Heart left ventricle (tissue), 16 donors: ENCODE measurements at regions of chr19 and their contacts with region 1.

Region 1: DNA sequence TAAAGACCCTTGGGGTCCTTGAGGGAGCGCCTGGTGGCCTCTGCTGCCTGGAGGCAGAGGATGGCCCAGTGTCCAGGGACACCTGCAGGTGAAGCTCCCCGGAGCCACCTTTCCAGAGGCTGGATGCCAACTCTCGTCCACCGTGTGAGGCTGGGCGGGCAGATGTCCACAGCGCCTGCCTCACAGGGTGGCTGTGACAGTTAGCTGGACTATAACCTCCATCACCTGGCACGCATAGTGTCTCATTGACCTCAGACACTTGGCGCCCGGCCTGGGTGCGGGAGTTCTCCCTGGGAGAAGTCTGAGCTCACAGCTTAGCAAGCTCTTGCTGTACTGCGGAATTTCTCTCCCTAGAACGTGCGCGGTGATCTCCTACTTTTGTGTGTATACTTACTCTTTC is 9.8 kb downstream of the BICRA start:
- DNase-seq: peak; percentile 70 to 92 (median 85)
- ATAC-seq: peak; percentile 80 to 91 (median 90)
- H3K4me3 ChIP-seq: no peak overlapping the region
- H3K27ac ChIP-seq: peak overlapping the region in 10 of 12 donors; percentile 26 to 88 (median 64)
- H3K4me1 ChIP-seq: peaks cover 0 to 52% (median 26%) of the 10 kb centered on the region in 12 donors
- H3K27me3 ChIP-seq: no peaks in the 10 kb centered on the region
- CTCF ChIP-seq: no peak
- POLR2A ChIP-seq: no peak

Region 2: DNA sequence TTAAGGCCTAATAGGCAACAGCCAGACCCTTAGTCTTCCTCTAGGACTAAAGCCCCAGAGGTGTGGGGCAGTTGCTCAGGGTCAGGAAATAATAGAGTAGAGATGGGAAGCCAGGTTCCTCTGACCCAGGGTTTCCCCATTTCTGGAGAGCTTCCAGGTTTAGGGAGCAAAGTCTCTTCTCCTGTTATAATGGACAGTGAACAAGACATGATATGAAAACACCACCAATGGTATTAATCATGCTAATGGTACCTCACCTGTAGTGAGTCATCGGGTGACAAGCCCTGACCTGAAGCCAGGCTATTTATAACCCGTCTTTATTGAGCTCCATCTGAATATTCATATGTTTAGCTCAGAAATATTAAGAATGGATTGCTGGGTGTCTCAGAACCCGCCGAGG is 14.7 kb after region 1 on chr19:
- intact Hi-C with region 1: loop called in 1 of 10 experiments (anchors 2 kb)
- DNase-seq: no peak
- ATAC-seq: no peak
- H3K4me3 ChIP-seq: no peak overlapping the region
- H3K27ac ChIP-seq: peak overlapping the region in 3 of 12 donors; percentile 35 to 80 (median 41)
- H3K4me1 ChIP-seq: peaks cover 0 to 44% (median 22%) of the 10 kb centered on the region in 12 donors
- H3K27me3 ChIP-seq: no peaks in the 10 kb centered on the region
- CTCF ChIP-seq: no peak
- POLR2A ChIP-seq: no peak

Region 3: GRCh38 chr19:47663841-47664771 is 45.3 kb after region 1 on chr19:
- intact Hi-C with region 1: loop called in 7 of 10 experiments (anchors 5 to 10 kb)
- DNase-seq: peak in 4 of 5 donors; percentile 76 to 88 (median 80)
- ATAC-seq: peak; percentile 79 to 86 (median 86)
- H3K4me3 ChIP-seq: peak overlapping the region in 4 of 12 donors; percentile 2 to 33 (median 8)
- H3K27ac ChIP-seq: peak overlapping the region; percentile 78 to 97 (median 90)
- H3K4me1 ChIP-seq: peaks cover 3 to 79% (median 47%) of the 10 kb centered on the region in 12 donors
- H3K27me3 ChIP-seq: no peaks in the 10 kb centered on the region
- CTCF ChIP-seq: no peak
- POLR2A ChIP-seq: peak in 1 of 2 donors; percentile 29